Gastrocnemius medialis (tissue), 4 donors: ENCODE measurements at regions of chr2 and their contacts with region 1.

Region 1: GRCh38 chr2:133886735-133887660 is 318.7 kb upstream of the NCKAP5 start:
- DNase-seq: peak; percentile 29 to 35
- ATAC-seq: peak; percentile 69 to 76
- H3K4me3 ChIP-seq: no peak overlapping the region
- H3K27ac ChIP-seq: no peak overlapping the region
- H3K4me1 ChIP-seq: no peaks in the 10 kb centered on the region
- H3K27me3 ChIP-seq: no peaks in the 10 kb centered on the region
- CTCF ChIP-seq: peak in 2 of 5 experiments; percentile 52
- POLR2A ChIP-seq: no peak

Region 2: GRCh38 chr2:132701810-132702209 is 1185.2 kb before region 1 on chr2:
- in situ Hi-C with region 1: no loop called
- intact Hi-C with region 1: no loop called
- DNase-seq: no peak
- ATAC-seq: no peak
- H3K4me3 ChIP-seq: no peak overlapping the region
- H3K27ac ChIP-seq: no peak overlapping the region
- H3K4me1 ChIP-seq: no peaks in the 10 kb centered on the region
- H3K27me3 ChIP-seq: no peaks in the 10 kb centered on the region
- CTCF ChIP-seq: no peak
- POLR2A ChIP-seq: no peak

Region 3: GRCh38 chr2:134207564-134208209 is 320.7 kb after region 1 on chr2:
- in situ Hi-C with region 1: no loop called
- intact Hi-C with region 1: loop called (anchors 10 kb)
- DNase-seq: no peak
- ATAC-seq: no peak
- H3K4me3 ChIP-seq: no peak overlapping the region
- H3K27ac ChIP-seq: no peak overlapping the region
- H3K4me1 ChIP-seq: peaks cover 4 to 8% of the 10 kb centered on the region in 2 donors
- H3K27me3 ChIP-seq: no peaks in the 10 kb centered on the region
- CTCF ChIP-seq: peak in 4 of 5 experiments; percentile 37 to 60 (median 56)
- POLR2A ChIP-seq: no peak

Region 4: DNA sequence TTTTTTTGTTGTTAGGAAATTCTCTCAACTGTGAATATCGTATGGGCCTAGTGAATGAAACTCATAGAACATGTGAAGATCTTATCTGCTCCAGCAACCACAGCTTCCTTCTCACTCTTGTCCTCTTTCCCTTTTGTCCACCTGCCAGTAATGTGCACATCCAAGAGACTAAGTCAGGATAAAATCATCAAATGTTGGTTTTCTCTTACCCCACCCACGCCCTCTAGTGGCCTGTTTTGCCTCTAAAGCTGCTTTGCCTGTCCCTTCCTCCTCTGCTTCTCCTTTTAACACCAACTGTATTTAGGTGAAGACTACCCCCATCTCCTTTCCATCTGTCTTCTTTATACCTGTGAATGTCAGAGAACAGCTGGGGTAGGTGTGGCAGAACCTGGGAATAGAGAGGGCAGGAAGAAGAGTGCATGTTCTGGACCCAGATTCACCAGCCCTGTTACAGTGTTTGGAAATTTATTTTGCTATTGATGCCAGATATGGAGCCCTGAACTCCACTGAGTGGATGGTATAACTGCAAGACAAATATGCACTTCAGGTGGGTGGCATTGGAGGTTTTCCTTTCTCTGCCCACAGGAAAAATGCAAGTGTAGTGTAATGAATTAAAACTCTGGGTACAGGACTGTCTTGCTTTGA is 358.5 kb after region 1 on chr2:
- in situ Hi-C with region 1: loop called in 1 of 4 experiments (anchors 25 kb)
- intact Hi-C with region 1: no loop called
- DNase-seq: peak; percentile 49 to 58
- ATAC-seq: peak; percentile 24 to 47
- H3K4me3 ChIP-seq: no peak overlapping the region
- H3K27ac ChIP-seq: no peak overlapping the region
- H3K4me1 ChIP-seq: peaks cover 2 to 6% of the 10 kb centered on the region in 2 donors
- H3K27me3 ChIP-seq: no peaks in the 10 kb centered on the region
- CTCF ChIP-seq: peak; percentile 40 to 73 (median 63)
- POLR2A ChIP-seq: no peak

Region 5: GRCh38 chr2:134431838-134432434 is 544.9 kb after region 1 on chr2:
- in situ Hi-C with region 1: no loop called
- intact Hi-C with region 1: no loop called
- DNase-seq: no peak
- ATAC-seq: no peak
- H3K4me3 ChIP-seq: no peak overlapping the region
- H3K27ac ChIP-seq: no peak overlapping the region
- H3K4me1 ChIP-seq: no peaks in the 10 kb centered on the region
- H3K27me3 ChIP-seq: no peaks in the 10 kb centered on the region
- CTCF ChIP-seq: no peak
- POLR2A ChIP-seq: no peak